Panc1 (cell line): ENCODE measurements at regions of chr16 and their contacts with region 1.

Region 1: GRCh38 chr16:66977341-66978113 is 10.9 kb upstream of the CES4A start:
- DNase-seq: peak; percentile 51
- ATAC-seq: peak; percentile 98
- H3K4me3 ChIP-seq: no peak overlapping the region
- H3K27ac ChIP-seq: no peak overlapping the region
- H3K4me1 ChIP-seq: no peaks in the 10 kb centered on the region
- H3K27me3 ChIP-seq: no peaks in the 10 kb centered on the region
- CTCF ChIP-seq: peak; percentile 91

Region 2: DNA sequence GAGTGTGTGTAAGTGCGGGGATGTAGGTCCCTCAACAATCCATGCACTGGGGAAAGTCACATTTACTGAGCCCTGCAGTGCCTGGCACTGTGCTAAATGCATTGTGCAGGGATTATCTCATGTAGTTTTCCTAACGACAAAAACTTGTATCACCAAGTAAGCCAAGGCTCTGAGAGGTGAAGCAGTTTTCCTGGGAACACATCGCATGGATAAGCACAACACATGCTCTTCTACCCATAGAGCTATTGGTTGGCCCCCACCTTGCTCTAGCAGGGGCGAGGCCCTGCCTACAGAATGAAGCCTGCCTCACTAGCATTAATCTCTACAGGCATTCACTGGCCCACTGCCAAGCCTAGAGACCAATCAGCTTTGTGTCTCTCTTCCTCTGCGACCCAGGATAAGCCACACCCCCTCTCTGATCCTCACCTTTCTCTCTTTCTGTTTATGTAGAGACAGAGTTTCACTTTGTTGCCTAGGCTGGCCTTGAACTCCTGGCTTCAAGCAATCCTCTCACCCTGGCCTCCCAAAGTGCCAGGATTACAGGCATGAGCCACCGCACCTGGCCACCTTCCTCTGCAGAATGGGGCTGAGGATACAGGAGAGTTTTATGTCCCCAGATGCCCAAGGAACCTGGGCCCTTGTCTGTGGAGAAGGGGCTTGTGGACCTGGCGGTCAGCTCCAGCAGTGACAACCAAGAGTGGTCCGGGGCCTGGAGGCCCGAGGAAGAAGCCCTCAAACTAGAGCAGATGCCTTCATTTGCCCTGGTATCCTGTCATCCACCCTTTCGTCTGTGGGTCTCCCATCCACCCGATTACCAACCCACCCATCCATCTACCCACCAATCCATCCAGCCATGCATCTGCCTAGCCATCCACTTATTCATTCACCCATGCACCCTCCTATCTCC is 71.6 kb before region 1 on chr16:
- CTCF ChIA-PET with region 1: no interaction called
- POLR2A ChIA-PET with region 1: no interaction called
- in situ Hi-C with region 1: no loop called
- intact Hi-C with region 1: no loop called
- DNase-seq: no peak
- ATAC-seq: no peak
- H3K4me3 ChIP-seq: no peak overlapping the region
- H3K27ac ChIP-seq: no peak overlapping the region
- H3K4me1 ChIP-seq: no peaks in the 10 kb centered on the region
- H3K27me3 ChIP-seq: no peaks in the 10 kb centered on the region
- CTCF ChIP-seq: no peak

Region 3: GRCh38 chr16:67109407-67110135 is 132.0 kb after region 1 on chr16 and contains the start of gene PHAF1:
- CTCF ChIA-PET with region 1: no interaction called
- POLR2A ChIA-PET with region 1: no interaction called
- in situ Hi-C with region 1: no loop called
- intact Hi-C with region 1: loop called (anchors 10 kb)
- DNase-seq: no peak
- ATAC-seq: peak; percentile 93
- H3K4me3 ChIP-seq: peak within 1 kb of the TSS; percentile 82 to 91
- H3K27ac ChIP-seq: peak within 1 kb of the TSS; percentile 90
- H3K4me1 ChIP-seq: peaks cover 9% of the 10 kb centered on the region
- H3K27me3 ChIP-seq: no peaks in the 10 kb centered on the region
- CTCF ChIP-seq: no peak
- total RNA-seq, gene PHAF1: 15.7 TPM

Region 4: GRCh38 chr16:67159593-67160406 is 182.3 kb after region 1 on chr16 and contains the starts of genes FBXL8 and TRADD:
- CTCF ChIA-PET with region 1: interaction called, 5 read pairs
- POLR2A ChIA-PET with region 1: no interaction called
- in situ Hi-C with region 1: no loop called
- intact Hi-C with region 1: loop called (anchors 10 kb)
- DNase-seq: peak; percentile 30
- ATAC-seq: peak; percentile 86
- H3K4me3 ChIP-seq: peak within 1 kb of the TSS; percentile 71 to 80
- H3K27ac ChIP-seq: peak within 1 kb of the TSS; percentile 74
- H3K4me1 ChIP-seq: peaks cover 3% of the 10 kb centered on the region; the same call in 1 of the 2 replicates
- H3K27me3 ChIP-seq: no peaks in the 10 kb centered on the region
- CTCF ChIP-seq: peak; percentile 79
- total RNA-seq, gene FBXL8: 17.8 TPM
- total RNA-seq, gene TRADD: 18.5 TPM

Region 5: GRCh38 chr16:67206838-67207115 is 229.2 kb after region 1 on chr16:
- CTCF ChIA-PET with region 1: no interaction called
- POLR2A ChIA-PET with region 1: interaction called, 11 read pairs
- in situ Hi-C with region 1: no loop called
- intact Hi-C with region 1: no loop called
- DNase-seq: no peak
- ATAC-seq: peak; percentile 20
- H3K4me3 ChIP-seq: no peak overlapping the region
- H3K27ac ChIP-seq: no peak overlapping the region
- H3K4me1 ChIP-seq: peaks cover 18% of the 10 kb centered on the region
- H3K27me3 ChIP-seq: no peaks in the 10 kb centered on the region
- CTCF ChIP-seq: no peak